ENCODE measurements at regions of chr20 and their contacts with region 1.

Region 1: GRCh38 chr20:63973636-63974402 is 4.1 kb upstream of the ZNF512B start:
- DNase-seq: peak; percentile 66 to 98 (median 88)

Region 2: GRCh38 chr20:63495741-63496595 is 477.9 kb before region 1 on chr20:
- intact Hi-C with region 1: loop called (anchors 1 kb)
- DNase-seq: peak in 8 of 10 donors; percentile 61 to 93 (median 74)

Region 3: DNA sequence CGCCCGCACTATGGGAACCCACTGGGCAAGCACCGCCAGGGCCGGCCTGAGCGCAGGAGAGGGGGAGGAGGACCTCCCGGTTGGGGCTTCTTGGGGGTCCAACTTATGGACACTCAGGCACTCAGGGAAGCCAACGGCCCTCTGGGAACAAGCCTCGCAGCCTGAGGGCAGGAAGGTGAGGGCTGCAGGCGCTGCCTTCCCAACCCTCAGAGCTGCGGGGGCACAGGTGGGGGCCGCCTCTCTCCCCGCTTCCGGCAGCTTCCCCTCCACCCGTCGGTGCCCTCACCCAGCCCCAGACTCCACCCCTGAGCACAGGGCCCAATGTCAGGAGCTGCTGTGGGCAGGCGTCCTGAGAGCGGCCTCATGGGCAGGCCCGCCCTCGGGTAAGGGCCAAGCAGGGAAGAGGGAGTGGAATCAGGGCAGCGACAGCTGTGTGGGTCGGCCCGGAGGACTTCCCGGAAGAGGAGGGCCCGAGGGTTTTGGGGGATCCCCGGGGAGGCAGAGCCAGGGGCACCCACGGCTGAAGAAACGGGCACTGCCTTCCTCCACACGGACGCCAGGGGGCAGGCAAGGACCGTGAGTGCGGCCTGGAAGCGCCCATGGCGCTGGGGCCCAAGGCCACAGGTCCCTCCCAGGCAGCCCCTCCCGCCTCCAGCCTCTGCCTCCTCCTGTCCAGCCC is 436.2 kb before region 1 on chr20:
- intact Hi-C with region 1: loop called (anchors 1 kb)
- DNase-seq: peak; percentile 47 to 96 (median 73)

Region 4: GRCh38 chr20:63612276-63612928 is 361.4 kb before region 1 on chr20:
- intact Hi-C with region 1: no loop called
- DNase-seq: peak in 3 of 10 donors; percentile 2 to 66 (median 66)

Region 5: GRCh38 chr20:63785691-63786131 is 188.1 kb before region 1 on chr20:
- intact Hi-C with region 1: loop called (anchors 5 kb)
- DNase-seq: peak in 5 of 10 donors; percentile 48 to 92 (median 87)